Activated T-helper 1 cell treated with anti-CD3 and anti-CD28 coated beads, Interleukin-12 subunit alpha, Interleukin-12 subunit beta, Interleukin-2, Interleukin-4 antibody, amounts not matched to agents 30 ng/mL and 10 ng/mL and 1 ng/mL, durations not matched to agents 14 hours and 24 hours and 36 hours (primary cell): ENCODE measurements at regions of chr6 and their contacts with region 1.

Region 1: DNA sequence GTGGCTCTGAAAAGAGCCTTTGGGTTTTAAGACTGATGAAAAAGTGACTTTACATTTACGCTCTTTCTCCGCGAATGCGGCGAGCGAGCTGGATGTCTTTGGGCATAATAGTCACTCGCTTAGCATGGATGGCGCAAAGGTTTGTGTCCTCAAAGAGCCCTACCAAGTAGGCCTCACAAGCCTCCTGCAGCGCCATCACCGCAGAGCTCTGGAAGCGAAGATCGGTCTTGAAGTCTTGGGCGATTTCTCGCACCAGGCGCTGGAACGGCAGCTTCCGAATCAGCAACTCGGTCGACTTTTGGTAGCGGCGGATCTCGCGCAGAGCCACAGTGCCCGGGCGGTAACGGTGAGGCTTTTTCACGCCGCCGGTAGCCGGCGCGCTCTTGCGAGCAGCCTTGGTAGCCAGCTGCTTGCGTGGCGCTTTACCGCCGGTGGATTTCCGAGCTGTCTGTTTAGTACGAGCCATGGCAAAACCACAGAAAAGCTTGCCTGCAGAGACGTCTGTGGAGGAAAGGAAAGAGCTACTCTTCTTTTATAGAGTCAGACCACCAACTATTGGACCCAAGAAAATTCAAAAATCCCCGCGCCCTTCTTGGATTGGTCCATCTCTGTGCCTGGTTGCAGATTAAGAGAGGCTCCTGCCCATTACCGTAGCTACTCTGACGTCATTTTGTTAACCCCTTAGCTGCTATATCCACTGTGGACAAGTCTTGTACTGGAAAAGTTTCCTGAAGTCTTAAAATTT is 55.5 kb upstream of the HFE start:
- DNase-seq: peak; percentile 89
- H3K4me3 Mint-ChIP-seq: peak overlapping the region; percentile 94
- H3K27ac Mint-ChIP-seq: peak overlapping the region; percentile 98
- H3K4me1 Mint-ChIP-seq: peaks cover 89% of the 10 kb centered on the region
- H3K27me3 Mint-ChIP-seq: peaks cover 2% of the 10 kb centered on the region

Region 2: GRCh38 chr6:25083784-25084507 is 947.8 kb before region 1 on chr6:
- intact Hi-C with region 1: no loop called
- DNase-seq: no peak
- H3K4me3 Mint-ChIP-seq: no peak overlapping the region
- H3K27ac Mint-ChIP-seq: peak overlapping the region; percentile 61
- H3K4me1 Mint-ChIP-seq: peaks cover 6% of the 10 kb centered on the region
- H3K27me3 Mint-ChIP-seq: no peaks in the 10 kb centered on the region

Region 3: DNA sequence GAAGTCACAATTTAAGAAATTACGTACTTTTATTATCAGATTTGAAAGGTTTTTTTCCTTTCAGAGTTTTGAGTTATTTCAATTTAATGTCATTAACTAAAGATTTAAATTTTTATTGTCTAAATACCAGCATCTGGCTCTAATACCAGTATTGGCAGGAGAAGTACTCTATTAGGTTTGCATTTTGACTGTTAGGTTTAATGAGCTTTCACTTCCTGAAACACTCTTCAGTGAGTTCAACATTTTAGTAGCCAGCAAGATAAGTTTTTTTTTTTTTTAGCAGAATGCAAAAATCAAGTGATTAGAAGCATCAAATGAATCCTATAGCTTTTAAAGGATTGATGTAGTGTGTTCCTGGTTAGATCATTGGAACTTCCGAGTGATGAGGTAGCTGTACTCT is 413.8 kb before region 1 on chr6:
- intact Hi-C with region 1: no loop called
- DNase-seq: no peak
- H3K4me3 Mint-ChIP-seq: no peak overlapping the region
- H3K27ac Mint-ChIP-seq: no peak overlapping the region
- H3K4me1 Mint-ChIP-seq: no peaks in the 10 kb centered on the region
- H3K27me3 Mint-ChIP-seq: peaks cover 8% of the 10 kb centered on the region

Region 4: GRCh38 chr6:26045065-26045927 is 13.5 kb after region 1 on chr6:
- intact Hi-C with region 1: loop called (anchors 1 kb)
- DNase-seq: peak; percentile 82
- H3K4me3 Mint-ChIP-seq: peak overlapping the region; percentile 86
- H3K27ac Mint-ChIP-seq: peak overlapping the region; percentile 98
- H3K4me1 Mint-ChIP-seq: peaks cover 49% of the 10 kb centered on the region
- H3K27me3 Mint-ChIP-seq: no peaks in the 10 kb centered on the region

Region 5: DNA sequence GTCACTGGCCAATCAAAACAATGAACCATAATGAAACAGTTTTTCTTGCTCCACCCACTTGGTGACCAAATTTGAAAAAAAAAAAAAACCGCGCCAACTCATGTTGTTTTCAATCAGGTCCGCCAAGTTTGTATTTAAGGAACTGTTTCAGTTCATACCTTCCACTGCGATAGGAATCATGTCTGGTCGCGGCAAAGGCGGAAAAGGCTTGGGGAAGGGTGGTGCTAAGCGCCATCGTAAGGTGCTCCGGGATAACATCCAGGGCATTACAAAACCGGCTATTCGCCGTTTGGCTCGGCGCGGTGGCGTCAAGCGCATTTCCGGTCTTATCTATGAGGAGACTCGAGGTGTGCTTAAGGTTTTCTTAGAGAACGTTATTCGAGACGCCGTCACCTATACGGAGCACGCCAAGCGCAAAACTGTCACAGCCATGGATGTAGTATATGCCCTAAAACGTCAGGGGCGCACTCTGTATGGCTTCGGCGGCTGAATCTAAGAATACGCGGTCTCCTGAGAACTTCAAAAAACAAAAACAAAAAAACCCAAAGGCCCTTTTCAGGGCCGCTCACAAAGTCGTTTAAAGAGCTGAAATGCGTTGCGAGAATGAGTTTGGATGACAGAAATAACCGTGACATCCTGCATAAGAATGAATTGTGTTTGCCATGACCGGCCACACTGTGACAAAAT is 72.1 kb after region 1 on chr6:
- intact Hi-C with region 1: loop called (anchors 1 kb)
- DNase-seq: peak; percentile 90
- H3K4me3 Mint-ChIP-seq: peak overlapping the region; percentile 90
- H3K27ac Mint-ChIP-seq: peak overlapping the region; percentile 99
- H3K4me1 Mint-ChIP-seq: peaks cover 25% of the 10 kb centered on the region
- H3K27me3 Mint-ChIP-seq: peaks cover 2% of the 10 kb centered on the region

Region 6: GRCh38 chr6:26183581-26184366 is 152.0 kb after region 1 on chr6:
- intact Hi-C with region 1: no loop called
- DNase-seq: peak; percentile 71
- H3K4me3 Mint-ChIP-seq: peak overlapping the region; percentile 86
- H3K27ac Mint-ChIP-seq: peak overlapping the region; percentile 97
- H3K4me1 Mint-ChIP-seq: peaks cover 58% of the 10 kb centered on the region
- H3K27me3 Mint-ChIP-seq: no peaks in the 10 kb centered on the region

Region 7: GRCh38 chr6:26249957-26250697 is 218.4 kb after region 1 on chr6:
- intact Hi-C with region 1: loop called (anchors 2 kb)
- DNase-seq: peak; percentile 68
- H3K4me3 Mint-ChIP-seq: peak overlapping the region; percentile 90
- H3K27ac Mint-ChIP-seq: peak overlapping the region; percentile 99
- H3K4me1 Mint-ChIP-seq: peaks cover 55% of the 10 kb centered on the region
- H3K27me3 Mint-ChIP-seq: peaks cover 2% of the 10 kb centered on the region